Right lobe of liver (tissue), 6 donors: ENCODE measurements at regions of chr7 and their contacts with region 1.

Region 1: DNA sequence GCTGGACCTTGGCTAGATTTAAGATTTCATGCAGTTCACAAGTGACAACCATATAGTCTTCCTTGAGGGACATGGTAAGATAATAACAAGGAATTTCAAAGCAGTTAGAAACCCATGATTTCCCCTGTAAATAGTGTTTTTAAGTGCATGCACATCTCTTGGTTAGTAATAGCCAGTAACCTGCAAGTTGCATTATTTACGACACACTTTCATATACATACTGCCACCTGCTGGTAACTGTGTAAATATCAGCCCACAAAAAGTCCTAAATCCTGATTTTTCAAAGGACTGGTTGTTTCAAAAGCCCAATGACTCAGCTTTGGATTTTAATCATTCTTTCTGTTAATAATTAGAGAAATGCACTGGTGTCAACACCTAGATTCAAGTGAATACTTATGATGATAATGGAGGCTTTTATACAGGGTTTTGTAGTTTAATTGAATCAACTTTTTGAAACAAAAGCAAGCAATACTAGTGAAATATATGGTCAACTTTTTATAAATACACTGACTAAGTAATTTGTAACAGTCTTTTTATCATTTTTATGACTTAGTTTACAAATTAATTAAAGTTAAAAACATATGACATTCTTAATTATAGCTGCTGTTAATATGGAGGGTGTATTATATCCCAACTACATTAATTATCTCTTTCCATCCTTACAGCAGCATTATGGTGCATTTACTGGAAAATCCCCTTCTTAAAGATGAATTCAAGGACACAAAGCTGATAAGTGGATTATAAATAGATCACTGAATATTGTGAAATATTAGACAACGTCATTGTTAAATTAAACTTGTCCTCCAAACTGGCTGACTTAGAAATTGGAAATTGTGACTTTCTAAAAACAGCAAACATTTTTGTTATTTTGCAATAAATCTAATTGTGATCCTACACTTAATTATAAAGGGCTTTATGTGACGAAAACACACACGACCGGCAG is 367.7 kb upstream of the SEMA3D start:
- DNase-seq: no peak
- ATAC-seq: peak; percentile 84 to 98 (median 91)
- H3K4me3 ChIP-seq: no peak overlapping the region
- H3K27ac ChIP-seq: no peak overlapping the region
- H3K4me1 ChIP-seq: peaks cover 0 to 4% (median 0%) of the 10 kb centered on the region in 4 donors
- H3K27me3 ChIP-seq: no peaks in the 10 kb centered on the region
- CTCF ChIP-seq: peak; percentile 70 to 81 (median 72)
- POLR2A ChIP-seq: no peak

Region 2: GRCh38 chr7:84997626-84998025 is 556.9 kb before region 1 on chr7:
- intact Hi-C with region 1: no loop called
- DNase-seq: no peak
- ATAC-seq: no peak
- H3K4me3 ChIP-seq: no peak overlapping the region
- H3K27ac ChIP-seq: no peak overlapping the region
- H3K4me1 ChIP-seq: no peaks in the 10 kb centered on the region
- H3K27me3 ChIP-seq: no peaks in the 10 kb centered on the region
- CTCF ChIP-seq: no peak
- POLR2A ChIP-seq: no peak

Region 3: DNA sequence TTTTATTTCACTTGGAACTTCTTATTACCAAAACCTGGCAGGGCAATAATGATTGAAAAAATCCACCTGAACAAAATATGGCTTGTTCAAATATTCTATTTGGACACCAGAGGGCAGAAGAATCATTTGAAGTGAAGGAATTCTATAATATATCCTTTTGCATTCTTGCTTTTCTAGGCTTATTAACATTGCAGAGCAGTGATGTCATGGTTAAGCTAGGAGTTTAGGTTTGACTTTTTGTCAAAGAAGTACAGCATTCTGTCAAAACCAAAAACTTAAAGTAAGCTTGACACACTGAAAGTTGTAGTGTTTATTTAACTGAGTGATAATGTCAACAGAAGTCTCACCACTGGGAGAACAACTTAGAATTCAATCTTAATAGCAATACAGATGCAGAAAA is 523.6 kb before region 1 on chr7:
- intact Hi-C with region 1: loop called in 1 of 2 experiments (anchors 10 kb)
- DNase-seq: no peak
- ATAC-seq: peak in 3 of 4 donors; percentile 40 to 53 (median 50)
- H3K4me3 ChIP-seq: no peak overlapping the region
- H3K27ac ChIP-seq: no peak overlapping the region
- H3K4me1 ChIP-seq: no peaks in the 10 kb centered on the region
- H3K27me3 ChIP-seq: peaks cover 0 to 3% of the 10 kb centered on the region in 2 donors
- CTCF ChIP-seq: peak; percentile 37 to 55 (median 50)
- POLR2A ChIP-seq: no peak

Region 4: GRCh38 chr7:85287106-85287825 is 267.2 kb before region 1 on chr7:
- intact Hi-C with region 1: no loop called
- DNase-seq: no peak
- ATAC-seq: no peak
- H3K4me3 ChIP-seq: no peak overlapping the region
- H3K27ac ChIP-seq: no peak overlapping the region
- H3K4me1 ChIP-seq: no peaks in the 10 kb centered on the region
- H3K27me3 ChIP-seq: no peaks in the 10 kb centered on the region
- CTCF ChIP-seq: no peak
- POLR2A ChIP-seq: no peak